Activated CD8-positive, alpha-beta T cell treated with anti-CD3 and anti-CD28 coated beads for 36 hours (primary cell): ENCODE measurements at regions of chr1 and their contacts with region 1.

Region 1: GRCh38 chr1:204791453-204792353 is 79.0 kb upstream of the NFASC start:
- DNase-seq: peak; percentile 93
- ATAC-seq: peak; percentile 94
- H3K4me3 Mint-ChIP-seq: no peak overlapping the region
- H3K27ac Mint-ChIP-seq: no peak overlapping the region
- H3K4me1 Mint-ChIP-seq: peaks cover 2% of the 10 kb centered on the region
- H3K27me3 Mint-ChIP-seq: peaks cover 28% of the 10 kb centered on the region
- CTCF ChIP-seq: peak; percentile 91

Region 2: DNA sequence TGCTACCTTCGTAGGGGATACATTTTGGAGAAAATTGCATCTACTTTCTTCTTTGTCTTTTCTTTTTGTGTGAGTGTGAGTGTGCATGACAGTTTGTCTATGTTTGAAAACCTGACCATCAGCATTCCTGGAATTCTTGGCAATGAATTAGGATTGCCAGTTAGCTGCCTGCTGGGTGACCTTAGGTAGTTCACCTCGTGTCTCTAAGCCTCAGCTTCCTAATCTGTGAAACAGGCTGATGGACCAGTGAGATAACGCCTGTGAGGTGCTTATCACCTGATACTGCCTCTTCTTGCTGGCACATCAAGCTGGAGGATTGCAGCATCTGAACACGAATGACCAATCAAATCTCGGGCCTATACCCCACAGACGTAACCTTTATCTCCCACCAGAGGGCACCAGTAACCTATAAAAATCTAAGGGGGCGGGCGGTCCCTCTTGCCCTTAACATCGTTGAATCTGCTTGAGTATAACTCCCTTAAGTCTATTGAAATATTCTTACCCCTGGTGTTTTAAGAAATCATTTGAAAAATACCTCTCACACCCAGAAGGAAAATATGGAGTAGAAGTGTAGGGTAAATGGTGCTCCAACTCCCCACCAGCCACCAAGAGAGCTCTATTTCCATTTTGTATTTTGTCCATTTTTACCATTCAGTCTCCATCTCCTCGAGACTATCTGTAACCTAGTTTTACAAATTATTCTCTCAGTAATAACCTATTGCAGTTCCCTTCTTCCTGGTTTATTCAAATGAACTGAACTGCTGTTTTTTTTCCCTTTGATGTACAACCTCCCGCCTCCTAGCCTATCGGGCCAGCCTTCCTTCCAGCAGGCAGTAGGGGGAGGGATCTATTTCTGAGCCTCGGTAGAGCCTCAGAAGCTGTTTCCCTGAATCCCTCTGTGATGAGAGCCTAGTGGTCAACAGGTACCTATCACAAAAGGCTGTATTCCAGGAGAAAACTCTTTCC is 225.8 kb before region 1 on chr1:
- CTCF ChIA-PET with region 1: interaction called, 12 read pairs
- POLR2A ChIA-PET with region 1: no interaction called
- intact Hi-C with region 1: no loop called
- DNase-seq: peak; percentile 80
- ATAC-seq: peak; percentile 86
- H3K4me3 Mint-ChIP-seq: no peak overlapping the region
- H3K27ac Mint-ChIP-seq: peak overlapping the region; percentile 77
- H3K4me1 Mint-ChIP-seq: peaks cover 45% of the 10 kb centered on the region
- H3K27me3 Mint-ChIP-seq: no peaks in the 10 kb centered on the region
- CTCF ChIP-seq: peak; percentile 66

Region 3: GRCh38 chr1:204706838-204707509 is 84.7 kb before region 1 on chr1:
- CTCF ChIA-PET with region 1: interaction called, 11 read pairs
- POLR2A ChIA-PET with region 1: no interaction called
- intact Hi-C with region 1: no loop called
- DNase-seq: no peak
- ATAC-seq: no peak
- H3K4me3 Mint-ChIP-seq: no peak overlapping the region
- H3K27ac Mint-ChIP-seq: no peak overlapping the region
- H3K4me1 Mint-ChIP-seq: peaks cover 23% of the 10 kb centered on the region
- H3K27me3 Mint-ChIP-seq: no peaks in the 10 kb centered on the region
- CTCF ChIP-seq: no peak

Region 4: DNA sequence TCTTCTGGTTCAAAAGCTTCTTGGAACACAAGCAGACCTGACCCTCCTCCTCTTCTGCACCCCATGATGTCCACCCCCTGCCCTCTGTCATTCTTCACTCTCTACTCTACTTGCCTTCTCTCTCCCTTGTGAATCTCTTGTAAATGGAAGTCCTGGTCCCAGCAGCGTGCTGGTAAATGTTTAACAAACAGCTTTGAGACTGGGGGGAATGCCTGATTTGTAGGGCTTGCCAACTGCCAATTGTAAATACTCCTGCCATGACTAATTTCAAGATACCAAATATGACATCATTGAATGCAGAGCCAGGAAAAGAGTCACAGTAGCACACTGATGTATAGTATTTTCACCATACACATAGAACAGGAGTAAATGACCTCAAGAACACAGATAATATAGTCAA is 65.2 kb before region 1 on chr1:
- CTCF ChIA-PET with region 1: no interaction called
- POLR2A ChIA-PET with region 1: no interaction called
- intact Hi-C with region 1: no loop called
- DNase-seq: no peak
- ATAC-seq: no peak
- H3K4me3 Mint-ChIP-seq: no peak overlapping the region
- H3K27ac Mint-ChIP-seq: no peak overlapping the region
- H3K4me1 Mint-ChIP-seq: peaks cover 3% of the 10 kb centered on the region
- H3K27me3 Mint-ChIP-seq: peaks cover 11% of the 10 kb centered on the region
- CTCF ChIP-seq: no peak

Region 5: GRCh38 chr1:204746838-204747442 is 44.8 kb before region 1 on chr1:
- CTCF ChIA-PET with region 1: interaction called, 29 read pairs
- POLR2A ChIA-PET with region 1: no interaction called
- intact Hi-C with region 1: no loop called
- DNase-seq: peak; percentile 68
- ATAC-seq: peak; percentile 99
- H3K4me3 Mint-ChIP-seq: no peak overlapping the region
- H3K27ac Mint-ChIP-seq: no peak overlapping the region
- H3K4me1 Mint-ChIP-seq: no peaks in the 10 kb centered on the region
- H3K27me3 Mint-ChIP-seq: peaks cover 6% of the 10 kb centered on the region
- CTCF ChIP-seq: peak; percentile 91

Region 6: DNA sequence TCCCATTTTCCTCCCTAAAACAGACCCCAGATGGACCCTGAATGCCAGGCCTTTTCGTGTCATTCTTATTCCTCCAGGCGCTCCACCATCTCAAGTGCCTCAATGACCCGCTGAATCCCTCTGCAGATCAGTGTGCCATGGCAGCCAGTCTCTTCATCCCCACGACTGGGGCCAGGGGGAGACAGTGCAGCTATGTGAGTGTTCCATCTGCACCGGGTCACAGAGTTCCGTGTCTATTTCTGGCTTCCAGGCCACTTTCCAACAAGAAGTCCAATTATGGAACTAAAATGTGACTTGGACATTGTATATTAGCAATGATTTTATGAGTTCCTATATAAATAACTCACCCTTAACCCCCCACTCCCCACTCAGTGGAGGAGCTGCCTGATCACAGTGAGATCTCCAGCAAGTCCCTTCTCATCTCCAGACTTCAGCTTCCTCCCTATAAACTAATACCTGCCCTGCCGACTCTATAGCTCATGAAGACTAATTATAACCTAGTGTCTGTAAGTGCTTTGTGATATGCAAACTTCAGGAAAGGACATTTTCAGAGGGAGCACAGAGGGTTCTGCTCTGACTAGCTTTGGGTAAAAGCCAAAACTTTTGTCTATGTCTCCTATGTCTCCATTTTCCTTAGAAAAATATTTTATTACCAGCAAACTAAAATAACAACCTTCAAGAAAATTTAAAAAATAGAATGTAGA is 22.6 kb after region 1 on chr1:
- CTCF ChIA-PET with region 1: interaction called, 307 read pairs
- POLR2A ChIA-PET with region 1: no interaction called
- intact Hi-C with region 1: no loop called
- DNase-seq: no peak
- ATAC-seq: no peak
- H3K4me3 Mint-ChIP-seq: no peak overlapping the region
- H3K27ac Mint-ChIP-seq: no peak overlapping the region
- H3K4me1 Mint-ChIP-seq: no peaks in the 10 kb centered on the region
- H3K27me3 Mint-ChIP-seq: peaks cover 6% of the 10 kb centered on the region
- CTCF ChIP-seq: no peak

Region 7: DNA sequence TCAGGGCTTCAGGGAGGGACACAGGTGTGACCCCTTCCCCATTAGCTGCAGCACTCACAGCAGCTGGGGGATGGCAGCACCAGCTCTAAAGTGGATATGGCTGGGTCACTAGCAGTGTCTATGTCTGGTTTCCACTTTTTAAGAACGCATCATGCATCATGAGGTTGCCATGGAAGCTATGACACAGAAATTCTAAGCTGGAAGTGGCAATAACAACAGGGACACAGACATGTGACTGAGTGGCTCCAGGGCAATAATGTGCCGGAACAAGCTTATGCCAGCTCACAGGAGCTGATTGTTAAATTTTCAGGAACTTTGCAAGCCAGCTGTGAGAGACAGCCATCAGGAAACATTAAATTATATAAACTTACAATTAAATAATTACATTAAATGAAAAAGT is 27.8 kb after region 1 on chr1:
- CTCF ChIA-PET with region 1: interaction called, 15 read pairs
- POLR2A ChIA-PET with region 1: no interaction called
- intact Hi-C with region 1: no loop called
- DNase-seq: no peak
- ATAC-seq: no peak
- H3K4me3 Mint-ChIP-seq: no peak overlapping the region
- H3K27ac Mint-ChIP-seq: no peak overlapping the region
- H3K4me1 Mint-ChIP-seq: no peaks in the 10 kb centered on the region
- H3K27me3 Mint-ChIP-seq: peaks cover 6% of the 10 kb centered on the region
- CTCF ChIP-seq: no peak

Region 8: GRCh38 chr1:204941421-204942338 is 150.0 kb after region 1 on chr1:
- CTCF ChIA-PET with region 1: interaction called, 10 read pairs
- POLR2A ChIA-PET with region 1: no interaction called
- intact Hi-C with region 1: no loop called
- DNase-seq: peak; percentile 77
- ATAC-seq: peak; percentile 79
- H3K4me3 Mint-ChIP-seq: no peak overlapping the region
- H3K27ac Mint-ChIP-seq: no peak overlapping the region
- H3K4me1 Mint-ChIP-seq: no peaks in the 10 kb centered on the region
- H3K27me3 Mint-ChIP-seq: peaks cover 3% of the 10 kb centered on the region
- CTCF ChIP-seq: peak; percentile 89